ENCODE measurements at regions of chr3 and their contacts with region 1.

Region 1: GRCh38 chr3:78988324-78988723 is 779.5 kb downstream of the ROBO1 start:
- DNase-seq: peak; percentile 51
- ATAC-seq: peak; percentile 66
- H3K4me3 ChIP-seq: no peak overlapping the region
- H3K27ac ChIP-seq: no peak overlapping the region
- H3K4me1 ChIP-seq: peaks cover 24% of the 10 kb centered on the region
- H3K27me3 ChIP-seq: no peaks in the 10 kb centered on the region
- CTCF ChIP-seq: peak; percentile 71

Region 2: GRCh38 chr3:78659386-78659987 is 328.8 kb before region 1 on chr3:
- CTCF ChIA-PET with region 1: no interaction called
- POLR2A ChIA-PET with region 1: no interaction called
- intact Hi-C with region 1: loop called (anchors 1 kb)
- DNase-seq: peak; percentile 76
- ATAC-seq: no peak
- H3K4me3 ChIP-seq: no peak overlapping the region
- H3K27ac ChIP-seq: no peak overlapping the region
- H3K4me1 ChIP-seq: no peaks in the 10 kb centered on the region
- H3K27me3 ChIP-seq: no peaks in the 10 kb centered on the region
- CTCF ChIP-seq: peak; percentile 79

Region 3: GRCh38 chr3:78857494-78858111 is 130.7 kb before region 1 on chr3:
- CTCF ChIA-PET with region 1: interaction called, 7 read pairs
- POLR2A ChIA-PET with region 1: no interaction called
- intact Hi-C with region 1: loop called (anchors 2 kb)
- DNase-seq: peak; percentile 63
- ATAC-seq: peak; percentile 88
- H3K4me3 ChIP-seq: no peak overlapping the region
- H3K27ac ChIP-seq: no peak overlapping the region
- H3K4me1 ChIP-seq: no peaks in the 10 kb centered on the region
- H3K27me3 ChIP-seq: no peaks in the 10 kb centered on the region
- CTCF ChIP-seq: peak; percentile 80

Region 4: GRCh38 chr3:78926523-78926922 is 61.8 kb before region 1 on chr3:
- CTCF ChIA-PET with region 1: no interaction called
- POLR2A ChIA-PET with region 1: no interaction called
- intact Hi-C with region 1: no loop called
- DNase-seq: peak; percentile 20
- ATAC-seq: peak; percentile 15; the same call in 1 of the 2 replicates
- H3K4me3 ChIP-seq: no peak overlapping the region
- H3K27ac ChIP-seq: no peak overlapping the region
- H3K4me1 ChIP-seq: no peaks in the 10 kb centered on the region
- H3K27me3 ChIP-seq: no peaks in the 10 kb centered on the region
- CTCF ChIP-seq: no peak

Region 5: GRCh38 chr3:79230282-79230681 is 242.0 kb after region 1 on chr3:
- CTCF ChIA-PET with region 1: no interaction called
- POLR2A ChIA-PET with region 1: no interaction called
- intact Hi-C with region 1: no loop called
- DNase-seq: no peak
- ATAC-seq: no peak
- H3K4me3 ChIP-seq: no peak overlapping the region
- H3K27ac ChIP-seq: no peak overlapping the region
- H3K4me1 ChIP-seq: no peaks in the 10 kb centered on the region
- H3K27me3 ChIP-seq: peaks cover 13% of the 10 kb centered on the region
- CTCF ChIP-seq: no peak